ENCODE measurements at regions of chr20 and their contacts with region 1.

Region 1: DNA sequence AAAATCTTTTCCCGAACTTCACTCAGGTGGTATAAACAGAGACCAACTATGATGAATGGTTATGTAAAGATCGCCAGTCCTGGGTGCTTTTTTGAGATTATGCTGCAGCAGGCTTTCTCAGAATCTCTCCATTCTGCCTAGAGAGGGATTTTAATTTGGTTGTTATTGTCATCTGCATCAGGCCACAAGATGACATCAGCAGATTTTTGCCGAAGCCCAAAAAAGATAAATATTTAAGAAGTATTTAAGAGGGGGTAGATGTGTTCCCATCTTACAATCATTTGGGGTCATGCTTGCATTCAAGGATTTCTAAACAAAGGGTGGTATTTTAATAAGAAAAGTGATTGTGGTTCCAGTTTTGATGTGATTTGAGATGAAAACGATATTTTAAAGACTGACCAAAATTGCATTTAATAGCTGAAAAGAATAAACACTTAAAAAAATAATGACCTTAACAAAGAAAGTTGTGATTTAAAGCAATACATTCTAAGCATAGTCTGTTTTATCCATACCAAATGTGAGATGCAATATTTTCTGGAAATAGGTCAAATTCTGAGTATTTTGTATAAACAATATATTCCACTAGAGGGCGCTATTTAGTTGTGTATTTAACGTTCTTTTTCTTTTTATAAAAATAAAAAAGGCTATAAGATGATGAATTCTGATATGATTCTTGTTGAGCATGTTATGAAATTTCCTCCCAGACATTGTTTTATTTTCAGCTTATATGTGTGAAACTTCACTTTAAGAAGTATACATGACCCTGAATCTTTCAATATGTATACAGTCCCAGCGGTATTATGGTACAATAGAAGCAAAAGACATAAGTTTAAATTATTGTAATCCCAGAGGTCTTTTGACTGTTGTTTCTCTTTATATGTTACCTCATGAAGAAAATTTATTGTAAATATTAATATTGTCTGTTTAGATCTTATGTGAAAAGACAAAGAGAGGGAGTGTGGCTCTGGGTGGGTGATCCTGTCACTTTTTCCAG is 51.0 kb upstream of the ZFP64 start:
- DNase-seq: peak; percentile 22
- H3K4me3 ChIP-seq: no peak overlapping the region
- H3K27ac ChIP-seq: no peak overlapping the region
- H3K4me1 ChIP-seq: no peaks in the 10 kb centered on the region
- H3K27me3 ChIP-seq: no peaks in the 10 kb centered on the region
- CTCF ChIP-seq: peak in 1 of 2 donors; percentile 19
- POLR2A ChIP-seq: no peak

Region 2: GRCh38 chr20:51661609-51662178 is 580.8 kb before region 1 on chr20:
- CTCF ChIA-PET with region 1: no interaction called
- POLR2A ChIA-PET with region 1: no interaction called
- dilution Hi-C with region 1: no loop called
- intact Hi-C with region 1: no loop called
- DNase-seq: peak; percentile 79
- H3K4me3 ChIP-seq: no peak overlapping the region
- H3K27ac ChIP-seq: peak overlapping the region; percentile 98
- H3K4me1 ChIP-seq: peaks cover 32% of the 10 kb centered on the region
- H3K27me3 ChIP-seq: no peaks in the 10 kb centered on the region
- CTCF ChIP-seq: no peak
- POLR2A ChIP-seq: no peak

Region 3: GRCh38 chr20:52219441-52219840 is 23.1 kb before region 1 on chr20:
- CTCF ChIA-PET with region 1: no interaction called
- POLR2A ChIA-PET with region 1: no interaction called
- dilution Hi-C with region 1: no loop called
- intact Hi-C with region 1: no loop called
- DNase-seq: no peak
- H3K4me3 ChIP-seq: no peak overlapping the region
- H3K27ac ChIP-seq: no peak overlapping the region
- H3K4me1 ChIP-seq: no peaks in the 10 kb centered on the region
- H3K27me3 ChIP-seq: peaks cover 0 to 5% of the 10 kb centered on the region in 2 experiments
- CTCF ChIP-seq: no peak
- POLR2A ChIP-seq: no peak

Region 4: DNA sequence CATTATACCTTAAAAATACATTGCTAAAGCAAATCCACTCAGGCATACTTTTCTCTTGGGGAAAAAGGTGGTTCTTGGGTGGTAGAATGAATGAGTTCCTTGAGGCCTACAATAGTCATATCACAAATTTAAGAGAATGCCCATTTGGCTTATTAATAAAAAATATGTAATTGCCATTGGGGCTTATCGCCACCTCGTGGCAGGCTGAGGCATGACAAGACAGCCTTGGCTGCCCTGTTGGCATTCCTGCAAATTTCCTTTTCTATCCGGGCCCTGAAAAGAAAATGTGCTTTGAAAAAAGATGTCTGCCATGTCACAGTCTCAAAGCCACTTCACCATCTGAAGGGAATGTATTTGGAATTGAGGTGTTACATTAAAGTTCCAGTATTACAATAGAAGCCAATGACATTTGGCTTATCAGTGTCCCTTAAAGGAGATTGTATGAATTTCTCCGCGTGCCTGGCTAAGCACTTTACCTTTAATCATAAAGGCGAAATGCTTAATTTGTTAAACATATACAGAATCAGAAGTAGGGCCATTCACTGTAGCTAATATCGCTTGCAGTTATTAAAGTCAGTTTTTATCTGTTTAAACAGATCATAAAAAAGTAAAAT is 137.3 kb after region 1 on chr20:
- CTCF ChIA-PET with region 1: no interaction called
- POLR2A ChIA-PET with region 1: no interaction called
- dilution Hi-C with region 1: no loop called
- intact Hi-C with region 1: loop called (anchors 2 kb)
- DNase-seq: peak; percentile 52
- H3K4me3 ChIP-seq: no peak overlapping the region
- H3K27ac ChIP-seq: no peak overlapping the region
- H3K4me1 ChIP-seq: no peaks in the 10 kb centered on the region
- H3K27me3 ChIP-seq: no peaks in the 10 kb centered on the region
- CTCF ChIP-seq: peak; percentile 84 to 90
- POLR2A ChIP-seq: no peak

Region 5: GRCh38 chr20:53216856-53217576 is 974.5 kb after region 1 on chr20:
- CTCF ChIA-PET with region 1: interaction called, 4 read pairs
- POLR2A ChIA-PET with region 1: no interaction called
- dilution Hi-C with region 1: no loop called
- intact Hi-C with region 1: loop called (anchors 2 kb)
- DNase-seq: peak; percentile 19
- H3K4me3 ChIP-seq: no peak overlapping the region
- H3K27ac ChIP-seq: no peak overlapping the region
- H3K4me1 ChIP-seq: no peaks in the 10 kb centered on the region
- H3K27me3 ChIP-seq: no peaks in the 10 kb centered on the region
- CTCF ChIP-seq: peak; percentile 74 to 89
- POLR2A ChIP-seq: no peak